ENCODE measurements at regions of chr6 and their contacts with region 1.

Region 1: GRCh38 chr6:86949771-86950170 is 12.4 kb downstream of the HTR1E start:
- DNase-seq: no peak
- ATAC-seq: no peak

Region 2: GRCh38 chr6:87350516-87350915 is 400.7 kb after region 1 on chr6:
- intact Hi-C with region 1: loop called (anchors 10 kb)
- DNase-seq: no peak
- ATAC-seq: no peak